ENCODE measurements at regions of chr2 and their contacts with region 1.

Region 1: DNA sequence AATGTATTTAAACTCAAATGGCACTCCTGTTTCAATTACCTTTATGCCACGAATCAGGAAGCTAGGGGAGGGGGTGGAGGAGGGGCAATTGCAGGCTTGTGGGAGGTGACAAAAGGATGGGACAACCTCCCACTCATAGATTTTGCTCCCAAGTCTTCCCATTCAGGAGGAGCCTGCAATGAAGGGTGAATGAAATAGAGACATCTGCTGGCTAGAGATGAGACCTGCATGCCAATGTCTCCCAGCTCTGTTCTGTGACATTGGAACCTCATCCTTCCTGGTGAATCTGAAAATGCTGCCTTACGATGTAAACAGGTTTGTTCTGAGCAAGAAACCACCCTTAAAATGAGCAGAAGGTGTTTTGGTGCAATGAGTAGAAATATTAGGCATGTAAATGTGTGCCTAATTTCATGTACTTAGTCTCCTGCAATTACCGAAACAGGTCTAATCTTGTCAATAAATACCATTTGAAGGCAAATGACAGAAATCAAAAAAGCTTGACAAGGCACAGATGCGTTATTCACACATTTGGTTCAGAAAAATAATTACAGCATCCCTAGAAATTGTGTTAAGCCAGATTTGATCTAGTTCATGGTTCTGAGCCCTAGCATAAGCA is 2.7 kb upstream of the PID1 start:
- DNase-seq: no peak
- ATAC-seq: peak; percentile 84

Region 2: DNA sequence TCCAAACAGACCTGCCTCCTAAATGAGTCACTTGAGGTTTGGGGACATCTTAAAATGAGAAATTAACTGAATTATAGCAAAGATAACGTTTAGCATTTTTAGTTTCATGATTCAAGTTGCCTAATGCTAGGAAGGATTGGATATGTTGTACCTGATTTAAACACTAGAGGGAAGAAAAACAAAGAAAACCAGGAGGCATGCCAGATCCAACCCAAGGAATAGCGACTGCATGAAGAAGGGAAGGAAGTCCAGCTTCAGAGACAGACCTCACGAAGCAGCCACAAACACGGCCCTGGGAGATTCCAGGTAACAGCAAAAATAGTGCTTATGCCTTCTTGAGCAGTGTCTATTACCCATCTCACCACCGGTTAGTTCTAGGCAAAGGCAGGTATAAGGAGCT is 592.4 kb before region 1 on chr2:
- intact Hi-C with region 1: loop called (anchors 10 kb)
- DNase-seq: no peak
- ATAC-seq: peak; percentile 72

Region 3: GRCh38 chr2:229417916-229418315 is 144.1 kb after region 1 on chr2:
- intact Hi-C with region 1: no loop called
- DNase-seq: no peak
- ATAC-seq: no peak